Transverse colon (tissue), 4 donors: ENCODE measurements at regions of chr2 and their contacts with region 1.

Region 1: DNA sequence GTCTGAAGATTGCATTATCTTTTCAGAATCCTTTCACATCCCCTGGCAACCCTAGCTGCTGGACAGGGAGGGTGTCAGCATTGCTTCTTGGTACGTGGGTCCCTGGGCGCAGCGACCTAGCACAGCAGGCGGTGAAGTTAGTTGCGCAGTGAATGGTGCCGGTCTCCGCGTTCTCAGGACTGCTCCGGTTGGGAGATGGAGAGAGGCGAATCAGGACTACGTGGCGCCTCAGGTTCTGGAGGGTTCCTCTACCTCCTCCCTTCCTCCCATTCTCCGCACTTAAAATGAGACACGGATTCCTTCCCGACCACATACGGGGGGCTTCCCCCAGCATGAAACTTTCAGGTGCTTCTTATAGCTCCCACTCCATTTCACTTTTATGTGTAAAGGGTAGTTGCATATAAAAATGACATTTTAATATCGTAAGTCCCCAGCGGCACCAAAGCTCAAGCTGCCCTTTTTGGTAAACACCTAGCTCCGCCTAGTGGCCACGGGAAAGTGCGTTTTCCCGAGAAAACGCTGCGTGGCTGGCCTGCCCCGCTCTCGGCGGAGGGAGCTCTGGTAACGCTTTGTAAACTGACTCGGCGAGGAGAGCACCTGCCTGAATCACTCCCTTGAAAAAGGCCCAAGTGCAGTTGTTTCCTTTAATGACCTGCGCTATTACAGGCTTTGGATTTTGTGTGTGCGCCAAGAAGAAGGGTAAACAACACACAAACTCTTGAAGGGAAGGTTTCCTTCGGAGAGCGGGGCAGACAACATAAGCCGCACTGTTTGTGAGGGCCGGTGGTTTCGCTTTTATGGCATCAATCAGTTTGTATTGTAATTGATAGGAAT is 32.9 kb upstream of the INHBB start:
- DNase-seq: peak; percentile 84
- H3K4me3 ChIP-seq: peak overlapping the region; percentile 1 to 55 (median 24)
- H3K27ac ChIP-seq: peak overlapping the region in 2 of 4 donors; percentile 25 to 27
- H3K4me1 ChIP-seq: peaks cover 0 to 15% (median 8%) of the 10 kb centered on the region in 4 donors
- H3K27me3 ChIP-seq: peaks cover 4% of the 10 kb centered on the region
- CTCF ChIP-seq: peak; percentile 80 to 89 (median 88)
- EP300 ChIP-seq: no peak
- POLR2A ChIP-seq: no peak

Region 2: DNA sequence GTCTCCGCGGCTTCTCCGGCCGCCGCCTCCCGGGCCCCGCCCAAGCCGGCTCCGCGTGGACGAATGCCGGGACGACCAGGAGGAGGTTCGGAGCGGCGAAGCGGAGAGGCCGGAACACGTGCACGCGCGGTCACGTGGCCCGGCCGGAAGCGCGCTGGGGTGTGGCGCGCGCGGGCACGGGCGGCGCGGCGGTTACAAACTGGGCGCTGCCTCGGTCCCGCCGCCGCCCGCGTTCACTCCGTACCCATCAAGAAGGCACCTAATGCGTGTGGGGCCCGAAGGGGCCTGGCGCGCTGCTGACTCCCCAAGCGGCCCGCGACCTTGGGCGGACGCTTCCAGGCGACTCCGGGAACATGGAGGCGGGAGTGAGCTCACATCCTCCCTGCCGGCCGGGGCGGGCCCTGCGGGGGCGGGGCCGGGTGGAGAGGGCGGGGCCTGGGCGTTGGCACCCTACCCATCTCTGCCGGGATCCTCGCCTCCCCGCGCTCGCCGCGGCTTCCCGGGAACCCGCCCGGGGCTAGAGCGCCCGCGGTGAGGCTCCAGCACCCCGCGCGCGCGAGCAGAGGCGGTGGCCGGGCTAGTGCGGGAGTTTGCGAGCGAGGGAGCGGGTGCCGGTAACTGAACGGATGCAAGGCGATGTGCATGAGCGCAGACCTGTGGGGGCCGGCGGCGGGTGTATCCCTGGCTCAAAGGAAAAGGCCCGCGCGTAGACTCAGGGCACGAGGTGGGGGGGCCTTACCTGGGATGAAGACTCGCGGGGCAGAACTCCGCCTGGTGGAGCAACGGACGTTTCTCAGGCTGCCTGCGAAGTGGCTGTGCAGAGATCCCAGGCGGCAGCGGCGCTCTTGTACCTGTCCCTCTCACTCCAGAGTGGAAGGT is 89.8 kb before region 1 on chr2 and contains the start of gene TMEM185B:
- in situ Hi-C with region 1: loop called in 1 of 4 experiments (anchors 10 kb)
- intact Hi-C with region 1: no loop called
- DNase-seq: peak; percentile 95
- H3K4me3 ChIP-seq: peak within 1 kb of the TSS; percentile 44 to 74 (median 66)
- H3K27ac ChIP-seq: peak within 1 kb of the TSS; percentile 92 to 97 (median 94)
- H3K4me1 ChIP-seq: peaks cover 8 to 26% (median 23%) of the 10 kb centered on the region in 4 donors
- H3K27me3 ChIP-seq: no peaks in the 10 kb centered on the region
- CTCF ChIP-seq: peak; percentile 22 to 59 (median 37)
- EP300 ChIP-seq: no peak
- POLR2A ChIP-seq: peak; percentile 60
- total RNA-seq, gene TMEM185B: 12.1 to 23.2 (median 17.8) TPM

Region 3: GRCh38 chr2:120252225-120253021 is 60.7 kb before region 1 on chr2 and contains the start of gene RALB:
- in situ Hi-C with region 1: no loop called
- intact Hi-C with region 1: loop called (anchors 10 kb)
- DNase-seq: peak; percentile 100
- H3K4me3 ChIP-seq: peak within 1 kb of the TSS; percentile 80 to 96 (median 86)
- H3K27ac ChIP-seq: peak within 1 kb of the TSS; percentile 91 to 96 (median 94)
- H3K4me1 ChIP-seq: peaks cover 5 to 26% (median 11%) of the 10 kb centered on the region in 4 donors
- H3K27me3 ChIP-seq: no peaks in the 10 kb centered on the region
- CTCF ChIP-seq: no peak
- EP300 ChIP-seq: no peak
- POLR2A ChIP-seq: peak; percentile 91
- total RNA-seq, gene RALB: 18.9 to 81.0 (median 59.4) TPM

Region 4: DNA sequence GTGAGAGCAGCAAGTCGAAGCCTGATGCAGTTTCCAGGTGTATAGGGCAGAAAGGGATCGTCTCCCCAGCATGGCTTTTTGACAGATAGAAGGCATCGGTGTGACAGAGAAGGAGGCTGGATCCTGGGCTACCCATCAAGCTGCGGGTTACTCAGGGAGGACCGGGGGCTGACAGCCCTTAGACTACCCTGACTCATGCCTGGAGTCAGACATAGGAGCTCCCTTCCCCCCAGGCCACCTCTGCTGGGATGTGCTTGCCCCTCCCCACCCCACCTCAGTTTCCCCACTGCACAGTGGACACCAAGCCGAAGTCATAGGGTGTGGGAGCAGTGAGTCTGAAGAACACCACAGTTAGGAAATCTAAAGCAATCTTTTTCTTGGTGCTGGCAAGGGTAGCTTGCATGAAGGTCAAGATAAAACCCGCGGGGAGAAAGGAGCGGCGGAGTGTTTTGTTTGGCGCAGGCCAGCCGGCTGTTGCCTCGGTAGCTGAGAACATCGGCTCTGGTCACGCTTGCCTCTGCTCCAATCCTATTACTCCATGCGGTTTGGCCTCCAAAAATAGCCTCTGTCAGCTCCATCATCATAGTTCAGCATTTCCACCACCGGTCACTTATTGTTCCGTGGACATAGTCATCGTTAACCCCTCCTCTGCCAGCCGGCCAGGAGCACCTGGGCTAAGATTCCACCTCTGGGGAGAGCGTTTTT is 253.4 kb after region 1 on chr2:
- in situ Hi-C with region 1: no loop called
- intact Hi-C with region 1: no loop called
- DNase-seq: no peak
- H3K4me3 ChIP-seq: no peak overlapping the region
- H3K27ac ChIP-seq: no peak overlapping the region
- H3K4me1 ChIP-seq: peaks cover 0 to 4% (median 0%) of the 10 kb centered on the region in 4 donors
- H3K27me3 ChIP-seq: peaks cover 22% of the 10 kb centered on the region
- CTCF ChIP-seq: no peak
- EP300 ChIP-seq: no peak
- POLR2A ChIP-seq: no peak